Right ventricle myocardium inferior (tissue), 1 donor: ENCODE measurements at regions of chr20 and their contacts with region 1.

Region 1: GRCh38 chr20:610130-611046 is at the start of gene TCF15:
- DNase-seq: peak; percentile 76
- ATAC-seq: peak; percentile 87
- total RNA-seq, gene TCF15: 13.1 TPM

Region 2: GRCh38 chr20:577167-577791 is 33.1 kb before region 1 on chr20:
- intact Hi-C with region 1: no loop called
- DNase-seq: no peak
- ATAC-seq: no peak

Region 3: GRCh38 chr20:588932-589672 is 21.3 kb before region 1 on chr20:
- intact Hi-C with region 1: no loop called
- DNase-seq: no peak
- ATAC-seq: no peak

Region 4: GRCh38 chr20:645318-646106 is 35.1 kb after region 1 on chr20:
- intact Hi-C with region 1: loop called (anchors 2 kb)
- DNase-seq: peak; percentile 86
- ATAC-seq: peak; percentile 66

Region 5: DNA sequence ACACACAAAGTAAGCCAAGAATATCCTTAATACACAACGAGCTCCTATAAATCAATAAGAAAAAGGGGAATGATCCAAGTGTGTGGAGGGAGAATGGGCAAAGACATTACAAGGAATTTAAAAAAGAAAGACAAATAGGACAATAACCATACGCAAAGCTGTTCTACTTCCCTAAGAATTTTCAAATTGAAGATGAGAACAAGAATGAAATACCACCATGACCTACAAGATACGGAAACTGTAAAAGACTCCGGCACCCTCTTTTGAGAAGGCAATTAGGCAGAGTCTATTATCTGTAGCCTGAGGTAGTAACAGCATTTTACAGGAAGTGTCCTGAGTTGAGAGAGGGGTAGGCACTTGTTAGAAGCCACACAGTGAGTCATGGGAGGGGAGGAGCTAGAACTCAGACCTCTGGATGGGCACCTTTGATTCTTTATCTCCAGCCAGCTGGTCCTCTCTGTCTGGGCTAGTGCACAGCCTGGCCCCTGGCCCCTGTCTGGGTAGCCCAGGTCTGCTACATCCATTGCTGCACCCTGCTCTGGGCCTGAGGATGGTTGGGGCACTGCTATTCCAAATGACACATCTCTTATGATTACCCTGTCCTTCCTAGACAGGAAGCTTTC is 376.5 kb after region 1 on chr20:
- intact Hi-C with region 1: no loop called
- DNase-seq: no peak
- ATAC-seq: no peak